ENCODE measurements at regions of chr13 and their contacts with region 1.

Region 1: DNA sequence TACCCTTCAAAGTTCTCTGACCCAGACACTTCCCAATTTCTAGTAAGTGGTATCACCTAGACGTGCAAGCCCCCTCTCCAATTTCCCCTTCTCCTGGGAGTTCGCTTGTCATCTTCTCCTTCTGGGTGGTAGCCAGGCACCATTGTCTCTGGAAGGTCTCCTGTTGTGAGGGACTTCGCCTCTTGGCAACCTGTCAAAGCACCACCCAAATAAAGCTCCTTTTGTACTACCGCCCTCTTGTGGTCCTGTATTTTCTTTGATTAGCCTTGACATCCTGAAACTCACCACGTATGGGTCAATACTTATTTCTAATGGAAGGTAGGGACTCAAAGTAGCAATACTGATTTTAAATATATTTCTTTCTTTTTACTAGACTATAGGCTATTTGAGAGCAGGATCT is 8.2 kb downstream of the GPC5 start:
- DNase-seq: peak; percentile 92
- H3K4me3 ChIP-seq: no peak overlapping the region
- H3K27ac ChIP-seq: no peak overlapping the region
- H3K4me1 ChIP-seq: no peaks in the 10 kb centered on the region
- CTCF ChIP-seq: no peak

Region 2: GRCh38 chr13:91133941-91134802 is 272.4 kb before region 1 on chr13:
- CTCF ChIA-PET with region 1: no interaction called
- POLR2A ChIA-PET with region 1: no interaction called
- intact Hi-C with region 1: loop called (anchors 1 kb)
- DNase-seq: peak; percentile 88
- H3K4me3 ChIP-seq: no peak overlapping the region
- H3K27ac ChIP-seq: no peak overlapping the region
- H3K4me1 ChIP-seq: no peaks in the 10 kb centered on the region
- CTCF ChIP-seq: no peak

Region 3: DNA sequence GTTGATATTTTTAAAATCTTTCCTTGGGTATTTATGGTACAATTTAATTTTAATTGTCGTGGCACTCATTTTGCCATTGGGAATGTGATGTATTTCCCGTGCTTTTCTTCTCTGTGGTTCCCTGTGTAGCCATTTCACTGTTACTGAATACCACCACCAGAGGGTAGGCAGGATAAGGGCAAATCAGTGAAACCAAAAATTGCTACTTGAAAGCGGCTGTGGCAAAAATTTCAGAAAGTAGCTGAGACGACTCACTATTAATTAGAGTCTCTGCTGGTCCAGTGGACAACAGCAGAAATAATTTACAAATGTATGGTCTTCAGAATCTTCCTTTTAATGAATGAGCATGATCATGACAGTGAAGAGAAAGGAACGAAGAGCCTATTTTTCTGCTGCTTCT is 93.5 kb before region 1 on chr13:
- CTCF ChIA-PET with region 1: interaction called, 3 read pairs
- POLR2A ChIA-PET with region 1: no interaction called
- intact Hi-C with region 1: loop called (anchors 2 kb)
- DNase-seq: peak; percentile 71
- H3K4me3 ChIP-seq: no peak overlapping the region
- H3K27ac ChIP-seq: no peak overlapping the region
- H3K4me1 ChIP-seq: peaks cover 5% of the 10 kb centered on the region
- CTCF ChIP-seq: no peak

Region 4: DNA sequence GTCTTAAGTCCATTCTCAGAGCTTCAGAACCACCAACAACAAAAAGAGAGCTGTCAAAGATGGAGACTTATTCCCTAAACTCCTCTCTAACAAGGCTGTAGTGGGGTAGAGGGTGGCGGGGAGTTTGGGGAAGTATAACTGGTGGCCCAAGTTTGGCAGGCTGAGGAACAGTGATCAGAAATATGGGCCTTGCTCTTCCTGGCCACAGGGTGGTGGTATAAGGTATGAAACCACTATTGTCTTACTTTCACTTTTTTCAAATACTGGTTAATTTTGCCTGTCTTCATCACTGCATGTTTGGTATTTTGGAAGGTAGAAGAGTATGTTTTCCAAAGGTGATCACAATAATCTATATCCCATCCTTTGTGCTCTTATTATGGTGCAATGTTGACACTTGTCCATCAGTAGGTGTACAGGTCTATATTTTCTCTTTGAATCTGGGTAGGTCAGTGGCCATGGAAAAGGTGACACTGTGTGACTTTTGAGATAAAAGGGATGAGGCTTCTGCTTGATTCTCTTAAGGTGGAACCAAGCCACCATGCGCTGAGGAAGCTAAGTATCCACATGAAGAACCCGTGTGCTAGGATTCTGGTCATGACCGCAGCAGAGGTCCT is 31.4 kb before region 1 on chr13:
- CTCF ChIA-PET with region 1: no interaction called
- POLR2A ChIA-PET with region 1: interaction called, 6 read pairs
- intact Hi-C with region 1: loop called (anchors 2 kb)
- DNase-seq: peak; percentile 85
- H3K4me3 ChIP-seq: no peak overlapping the region
- H3K27ac ChIP-seq: no peak overlapping the region
- H3K4me1 ChIP-seq: no peaks in the 10 kb centered on the region
- CTCF ChIP-seq: no peak

Region 5: GRCh38 chr13:91389186-91389585 is 17.4 kb before region 1 on chr13:
- CTCF ChIA-PET with region 1: no interaction called
- POLR2A ChIA-PET with region 1: interaction called, 10 read pairs
- intact Hi-C with region 1: no loop called
- DNase-seq: no peak
- H3K4me3 ChIP-seq: no peak overlapping the region
- H3K27ac ChIP-seq: no peak overlapping the region
- H3K4me1 ChIP-seq: no peaks in the 10 kb centered on the region
- CTCF ChIP-seq: no peak

Region 6: DNA sequence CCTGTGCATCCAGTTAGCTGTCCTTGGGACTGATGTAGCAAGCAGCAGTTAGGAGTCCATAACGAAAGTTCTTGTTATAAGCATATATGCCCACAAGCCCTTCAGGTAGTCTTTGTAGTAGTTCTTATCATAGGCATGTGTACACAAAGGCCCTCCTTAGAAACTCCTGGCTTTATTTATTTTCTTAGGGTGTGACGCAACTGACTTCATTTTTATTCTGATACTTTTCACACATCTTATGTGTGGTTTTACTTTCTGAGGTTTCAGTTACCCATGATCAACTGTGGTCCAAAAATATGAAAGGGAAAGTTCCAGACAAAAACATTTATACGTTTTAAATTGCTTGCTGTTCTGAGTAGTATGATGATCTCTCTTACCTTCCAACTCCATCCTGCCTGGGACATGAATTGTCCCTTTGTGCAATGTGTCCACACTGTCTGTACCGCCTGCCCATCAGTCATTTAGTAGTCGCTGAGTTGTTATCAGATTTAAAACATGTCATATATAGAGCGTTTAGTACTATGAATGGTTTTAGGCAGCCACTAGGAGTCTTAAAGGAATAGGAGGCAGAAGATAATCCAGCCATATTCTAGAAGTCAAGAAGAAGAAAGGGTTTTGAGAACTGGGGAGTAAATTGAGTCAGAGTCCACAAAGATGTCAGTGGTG is 11.2 kb after region 1 on chr13:
- CTCF ChIA-PET with region 1: interaction called, 4 read pairs
- POLR2A ChIA-PET with region 1: interaction called, 15 read pairs
- intact Hi-C with region 1: no loop called
- DNase-seq: no peak
- H3K4me3 ChIP-seq: no peak overlapping the region
- H3K27ac ChIP-seq: no peak overlapping the region
- H3K4me1 ChIP-seq: no peaks in the 10 kb centered on the region
- CTCF ChIP-seq: no peak

Region 7: GRCh38 chr13:91450913-91451312 is 44.3 kb after region 1 on chr13:
- CTCF ChIA-PET with region 1: no interaction called
- POLR2A ChIA-PET with region 1: interaction called, 11 read pairs
- intact Hi-C with region 1: no loop called
- DNase-seq: no peak
- H3K4me3 ChIP-seq: no peak overlapping the region
- H3K27ac ChIP-seq: no peak overlapping the region
- H3K4me1 ChIP-seq: no peaks in the 10 kb centered on the region
- CTCF ChIP-seq: no peak

Region 8: GRCh38 chr13:91618315-91618714 is 211.7 kb after region 1 on chr13:
- CTCF ChIA-PET with region 1: no interaction called
- POLR2A ChIA-PET with region 1: no interaction called
- intact Hi-C with region 1: no loop called
- DNase-seq: no peak
- H3K4me3 ChIP-seq: no peak overlapping the region
- H3K27ac ChIP-seq: no peak overlapping the region
- H3K4me1 ChIP-seq: no peaks in the 10 kb centered on the region
- CTCF ChIP-seq: no peak